ENCODE measurements at regions of chr9 and their contacts with region 1.

Region 1: GRCh38 chr9:34178520-34179212 is at the start of gene UBAP1:
- DNase-seq: peak; percentile 91 to 99 (median 97)

Region 2: DNA sequence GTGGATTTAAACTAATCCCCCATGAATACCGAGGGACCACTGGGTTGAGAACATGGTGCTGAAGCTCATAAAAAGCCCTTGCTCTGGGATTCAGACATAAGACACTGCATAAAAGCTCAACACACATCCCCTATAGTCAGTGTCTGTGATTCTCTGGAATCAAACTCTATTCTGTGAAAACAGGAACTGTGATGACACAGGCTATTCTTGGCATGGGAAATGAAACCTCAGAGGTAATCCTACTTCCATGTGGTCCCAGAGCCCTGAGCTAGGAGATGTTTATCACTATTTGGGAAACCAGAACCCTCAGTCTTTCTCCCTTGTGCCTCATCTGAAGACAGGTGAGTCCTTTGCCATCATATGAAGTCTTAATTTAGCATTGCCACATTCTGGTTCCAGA is 518.7 kb before region 1 on chr9:
- intact Hi-C with region 1: no loop called
- DNase-seq: no peak

Region 3: DNA sequence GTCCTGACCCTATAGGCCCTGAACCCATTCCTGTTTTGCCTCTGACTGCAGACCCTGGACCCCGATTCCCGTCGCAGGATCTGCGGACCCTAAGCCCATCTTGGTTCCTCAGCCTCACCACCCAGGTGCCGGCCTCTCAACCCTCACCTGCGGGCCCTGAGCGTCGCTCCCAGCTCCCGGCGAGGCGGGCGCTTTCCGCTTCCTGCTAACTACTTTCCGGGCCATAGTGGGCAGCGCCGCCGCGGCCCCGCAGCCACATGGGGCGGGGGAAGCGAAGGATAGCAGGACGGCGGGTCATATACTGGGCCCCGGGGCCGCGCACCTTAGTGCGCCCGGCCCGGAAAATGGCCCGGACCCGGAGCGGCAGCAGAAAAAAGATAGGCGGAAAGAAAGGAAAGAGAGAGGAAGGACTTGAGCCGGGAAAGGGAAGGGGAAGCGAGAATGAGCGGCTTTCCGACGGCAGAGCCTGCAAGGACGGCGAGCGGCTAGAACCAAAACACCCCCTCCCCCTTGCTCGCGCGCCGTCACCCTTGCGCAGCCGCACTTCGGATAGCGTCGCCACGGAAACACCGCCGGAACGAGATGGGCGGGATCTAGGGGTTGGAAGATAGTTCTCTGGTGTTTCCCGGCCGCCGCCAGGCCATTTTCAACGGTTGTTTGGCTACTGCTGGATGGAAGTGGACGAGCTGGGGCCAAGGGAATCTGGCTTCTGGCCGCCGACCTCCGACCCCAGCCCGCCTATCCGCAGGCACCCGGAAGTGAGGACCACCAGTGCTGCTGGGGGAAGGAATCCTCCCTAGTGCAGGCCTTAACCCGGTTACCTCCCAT is 52.2 kb before region 1 on chr9 and contains the start of gene DCAF12:
- intact Hi-C with region 1: loop called (anchors 5 kb)
- DNase-seq: peak; percentile 83 to 98 (median 86)

Region 4: DNA sequence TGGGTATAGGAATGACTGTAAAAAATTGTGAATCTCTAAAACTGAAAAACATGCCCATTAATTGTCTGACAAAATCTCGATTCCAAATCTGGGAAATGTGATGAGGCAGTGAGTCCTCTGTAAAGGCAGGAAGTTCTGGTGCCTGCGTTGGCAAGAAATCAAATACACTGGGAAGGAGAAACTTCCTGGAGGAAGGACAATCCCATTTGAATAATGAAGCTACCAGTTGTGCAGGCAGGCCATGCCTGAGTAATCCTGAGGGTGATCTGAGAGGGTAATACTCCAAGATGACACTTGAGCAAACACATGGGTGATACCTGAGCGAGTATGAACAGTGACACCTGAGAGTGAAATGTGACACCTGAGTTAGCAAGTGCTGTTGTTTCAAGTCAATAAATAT is 100.7 kb after region 1 on chr9:
- intact Hi-C with region 1: no loop called
- DNase-seq: no peak